Testis (tissue), 5 donors: ENCODE measurements at regions of chr15 and their contacts with region 1.

Region 1: GRCh38 chr15:88274553-88275460 is 18.3 kb upstream of the NTRK3 start:
- DNase-seq: peak; percentile 76
- H3K4me3 ChIP-seq: no peak overlapping the region
- H3K27ac ChIP-seq: no peak overlapping the region
- H3K4me1 ChIP-seq: no peaks in the 10 kb centered on the region
- H3K27me3 ChIP-seq: no peaks in the 10 kb centered on the region
- CTCF ChIP-seq: peak; percentile 24 to 77 (median 74)
- POLR2A ChIP-seq: no peak

Region 2: DNA sequence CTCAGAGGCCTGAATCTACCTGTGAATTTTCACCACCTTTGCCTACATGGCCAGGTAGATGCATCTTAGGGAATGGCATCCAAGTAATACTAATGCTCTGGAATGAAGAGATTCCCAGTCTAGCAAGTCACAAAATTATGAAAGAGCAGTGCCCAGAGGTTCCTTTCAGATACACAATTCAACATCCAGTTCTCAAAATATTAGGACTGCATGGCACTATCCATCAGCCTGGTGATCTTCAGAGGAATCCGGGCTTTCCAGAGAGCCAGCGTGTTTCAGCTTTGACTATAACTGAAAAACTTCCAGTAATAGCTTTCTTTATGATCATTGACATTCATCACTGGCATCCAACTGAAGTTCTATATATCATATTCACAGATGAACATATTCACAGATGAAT is 1345.3 kb before region 1 on chr15:
- intact Hi-C with region 1: loop called (anchors 10 kb)
- DNase-seq: no peak
- H3K4me3 ChIP-seq: no peak overlapping the region
- H3K27ac ChIP-seq: no peak overlapping the region
- H3K4me1 ChIP-seq: no peaks in the 10 kb centered on the region
- H3K27me3 ChIP-seq: no peaks in the 10 kb centered on the region
- CTCF ChIP-seq: no peak
- POLR2A ChIP-seq: no peak

Region 3: GRCh38 chr15:87881026-87881425 is 393.8 kb before region 1 on chr15:
- intact Hi-C with region 1: no loop called
- DNase-seq: no peak
- H3K4me3 ChIP-seq: no peak overlapping the region
- H3K27ac ChIP-seq: no peak overlapping the region
- H3K4me1 ChIP-seq: no peaks in the 10 kb centered on the region
- H3K27me3 ChIP-seq: no peaks in the 10 kb centered on the region
- CTCF ChIP-seq: no peak
- POLR2A ChIP-seq: no peak

Region 4: DNA sequence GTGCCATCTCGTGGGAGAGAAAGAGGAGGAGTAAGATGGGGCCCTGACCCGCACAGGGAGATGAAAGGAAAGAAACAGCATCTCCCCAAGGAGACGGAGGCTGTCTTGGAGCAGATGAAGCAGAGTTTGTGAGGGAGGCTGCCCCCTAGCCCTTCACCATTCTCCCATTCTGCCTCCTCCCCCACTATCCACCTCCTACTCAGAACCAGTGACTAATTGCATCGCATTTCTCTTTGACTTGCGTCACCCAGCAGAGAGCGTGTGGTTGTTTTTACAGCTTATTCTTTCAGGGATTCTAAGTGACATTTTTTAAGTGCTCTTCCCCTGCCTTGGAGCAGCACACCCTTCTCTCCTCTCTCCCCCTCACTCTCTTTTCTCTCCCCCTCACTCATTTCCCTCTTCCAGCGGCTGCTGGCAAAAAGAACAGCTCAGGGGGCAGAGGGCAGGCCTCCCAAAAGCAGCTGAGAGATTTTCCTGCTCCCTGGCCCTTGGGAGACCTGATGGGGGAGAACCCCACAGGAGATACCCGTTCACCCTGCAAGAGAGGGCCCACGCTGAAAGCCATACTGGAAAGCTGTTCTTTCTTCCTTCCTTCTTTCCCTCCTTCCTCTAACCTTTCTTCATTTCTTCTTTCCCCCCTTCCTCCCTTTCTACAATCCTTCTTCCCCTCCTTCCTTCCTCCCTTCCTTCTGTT is 100.6 kb after region 1 on chr15:
- intact Hi-C with region 1: no loop called
- DNase-seq: no peak
- H3K4me3 ChIP-seq: no peak overlapping the region
- H3K27ac ChIP-seq: no peak overlapping the region
- H3K4me1 ChIP-seq: no peaks in the 10 kb centered on the region
- H3K27me3 ChIP-seq: no peaks in the 10 kb centered on the region
- CTCF ChIP-seq: no peak
- POLR2A ChIP-seq: no peak